ENCODE measurements at regions of chr7 and their contacts with region 1.

Region 1: GRCh38 chr7:100469227-100470044 is 5.4 kb upstream of the SPACDR start:
- DNase-seq: peak; percentile 91
- H3K4me3 ChIP-seq: no peak overlapping the region
- H3K27ac ChIP-seq: peak overlapping the region in 2 of 3 donors; percentile 58 to 67
- H3K4me1 ChIP-seq: peaks cover 25 to 46% of the 10 kb centered on the region in 2 donors
- H3K27me3 ChIP-seq: no peaks in the 10 kb centered on the region
- CTCF ChIP-seq: peak; percentile 86 to 96 (median 94)
- POLR2A ChIP-seq: no peak

Region 2: DNA sequence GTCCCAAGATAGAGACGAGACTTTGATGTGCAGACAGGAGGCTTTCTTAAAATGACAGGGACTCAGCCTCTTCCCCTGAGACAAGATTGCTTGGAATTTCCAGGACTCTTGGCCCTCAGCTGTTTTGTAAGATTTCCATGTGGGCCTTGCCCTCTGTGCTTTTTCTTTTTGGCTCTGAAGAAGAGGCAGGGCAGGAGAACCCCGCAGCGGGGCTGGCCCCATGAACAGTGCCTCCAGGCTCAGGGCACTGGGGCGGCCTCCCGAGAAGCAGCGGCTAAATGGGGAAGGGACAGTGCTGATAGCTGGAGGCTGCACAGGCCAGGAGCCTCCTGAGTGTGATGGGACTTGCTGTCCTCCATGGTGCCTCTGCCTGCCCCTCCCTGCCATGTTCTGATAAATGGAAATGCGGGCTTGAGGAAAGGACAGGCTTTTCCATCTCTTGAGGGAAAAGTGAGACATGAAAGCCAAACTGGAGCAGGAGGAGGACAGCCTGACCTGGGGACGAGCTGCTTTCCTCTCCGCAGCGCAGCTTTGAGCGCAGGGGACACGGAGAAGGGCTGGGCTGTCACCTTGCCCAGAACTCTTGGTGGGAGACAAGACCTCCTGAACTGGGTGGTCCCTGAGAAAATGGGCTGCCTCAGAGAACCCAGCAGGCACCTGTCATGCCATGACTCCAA is 92.2 kb after region 1 on chr7:
- intact Hi-C with region 1: loop called (anchors 2 kb)
- DNase-seq: no peak
- H3K4me3 ChIP-seq: no peak overlapping the region
- H3K27ac ChIP-seq: no peak overlapping the region
- H3K4me1 ChIP-seq: peaks cover 0 to 3% of the 10 kb centered on the region in 2 donors
- H3K27me3 ChIP-seq: no peaks in the 10 kb centered on the region
- CTCF ChIP-seq: no peak
- POLR2A ChIP-seq: no peak

Region 3: GRCh38 chr7:100611974-100612729 is 142.7 kb after region 1 on chr7 and contains the start of gene MOSPD3:
- intact Hi-C with region 1: no loop called
- DNase-seq: peak; percentile 98
- H3K4me3 ChIP-seq: peak within 1 kb of the TSS; percentile 45 to 89 (median 77)
- H3K27ac ChIP-seq: peak within 1 kb of the TSS; percentile 80 to 97 (median 88)
- H3K4me1 ChIP-seq: peaks cover 8 to 12% of the 10 kb centered on the region in 2 donors
- H3K27me3 ChIP-seq: no peaks in the 10 kb centered on the region
- CTCF ChIP-seq: peak in 3 of 6 experiments; percentile 21 to 32 (median 24)
- POLR2A ChIP-seq: peak in 1 of 2 donors; percentile 81
- total RNA-seq, gene MOSPD3: 9.1 to 22.7 (median 12.3) TPM

Region 4: DNA sequence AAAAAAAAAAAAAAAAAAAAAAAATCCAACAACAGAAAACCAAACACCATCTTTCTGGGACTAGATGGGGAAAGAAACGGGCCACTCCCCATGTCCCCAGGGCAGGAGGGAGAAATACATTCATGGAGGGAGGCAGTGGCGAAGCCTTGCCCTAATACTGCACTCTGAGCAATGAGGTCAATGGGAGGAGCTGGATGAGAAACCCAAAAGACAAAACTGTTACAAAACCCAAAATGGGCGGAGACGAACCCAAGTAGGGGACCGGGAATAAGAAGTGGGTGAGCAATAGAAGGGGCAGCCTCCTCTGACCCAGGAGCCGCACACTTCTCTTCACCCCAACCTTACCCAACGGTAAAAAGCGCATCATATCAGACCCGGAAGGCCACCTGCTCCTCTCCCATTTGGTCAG is 210.7 kb after region 1 on chr7:
- intact Hi-C with region 1: loop called (anchors 10 kb)
- DNase-seq: no peak
- H3K4me3 ChIP-seq: no peak overlapping the region
- H3K27ac ChIP-seq: peak overlapping the region in 1 of 3 donors; percentile 30
- H3K4me1 ChIP-seq: peaks cover 8% of the 10 kb centered on the region in 2 donors
- H3K27me3 ChIP-seq: no peaks in the 10 kb centered on the region
- CTCF ChIP-seq: no peak
- POLR2A ChIP-seq: no peak

Region 5: DNA sequence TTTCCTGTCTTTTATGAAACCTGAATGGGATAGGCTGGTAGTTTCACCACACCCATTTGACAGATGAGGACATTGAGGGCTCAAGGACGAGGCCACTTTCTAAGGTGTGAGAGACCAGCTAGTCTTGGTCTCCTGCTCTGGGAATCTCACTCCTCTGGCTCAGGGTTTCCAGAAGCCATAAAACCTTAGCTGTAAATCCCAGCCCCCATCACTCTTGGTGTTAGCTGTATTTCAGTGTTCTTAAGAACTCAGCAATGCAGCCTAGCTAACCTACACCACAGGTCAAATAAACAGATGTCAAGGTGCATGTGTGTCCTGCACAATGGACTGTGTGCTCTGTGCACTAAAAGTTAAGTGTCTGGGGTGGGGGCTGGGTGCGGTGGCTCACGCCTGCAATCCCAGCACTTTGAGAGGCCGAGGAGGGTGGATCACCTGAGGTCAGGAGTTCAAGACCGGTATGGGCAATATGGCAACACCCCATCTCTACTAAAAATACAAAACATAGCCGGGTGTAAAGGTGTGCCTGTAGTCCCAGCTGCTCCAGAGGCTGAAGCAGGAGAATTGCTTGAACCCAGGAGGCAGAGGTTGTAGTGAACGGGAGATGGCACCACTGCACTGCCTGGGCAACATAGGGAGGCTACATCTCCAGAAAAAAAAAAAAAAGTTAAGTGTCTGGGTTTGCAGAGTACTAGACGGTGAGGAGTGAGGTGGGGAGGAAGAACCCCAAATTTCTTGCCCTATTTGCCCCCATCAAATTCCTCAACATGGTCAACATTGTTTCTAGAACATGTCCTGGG is 250.3 kb after region 1 on chr7:
- intact Hi-C with region 1: loop called (anchors 10 kb)
- DNase-seq: no peak
- H3K4me3 ChIP-seq: no peak overlapping the region
- H3K27ac ChIP-seq: no peak overlapping the region
- H3K4me1 ChIP-seq: peaks cover 0 to 11% of the 10 kb centered on the region in 2 donors
- H3K27me3 ChIP-seq: peaks cover 8% of the 10 kb centered on the region
- CTCF ChIP-seq: no peak
- POLR2A ChIP-seq: no peak

Measured in thyroid gland (tissue), 4 donors.